ENCODE measurements at regions of chr7 and their contacts with region 1.

Region 1: DNA sequence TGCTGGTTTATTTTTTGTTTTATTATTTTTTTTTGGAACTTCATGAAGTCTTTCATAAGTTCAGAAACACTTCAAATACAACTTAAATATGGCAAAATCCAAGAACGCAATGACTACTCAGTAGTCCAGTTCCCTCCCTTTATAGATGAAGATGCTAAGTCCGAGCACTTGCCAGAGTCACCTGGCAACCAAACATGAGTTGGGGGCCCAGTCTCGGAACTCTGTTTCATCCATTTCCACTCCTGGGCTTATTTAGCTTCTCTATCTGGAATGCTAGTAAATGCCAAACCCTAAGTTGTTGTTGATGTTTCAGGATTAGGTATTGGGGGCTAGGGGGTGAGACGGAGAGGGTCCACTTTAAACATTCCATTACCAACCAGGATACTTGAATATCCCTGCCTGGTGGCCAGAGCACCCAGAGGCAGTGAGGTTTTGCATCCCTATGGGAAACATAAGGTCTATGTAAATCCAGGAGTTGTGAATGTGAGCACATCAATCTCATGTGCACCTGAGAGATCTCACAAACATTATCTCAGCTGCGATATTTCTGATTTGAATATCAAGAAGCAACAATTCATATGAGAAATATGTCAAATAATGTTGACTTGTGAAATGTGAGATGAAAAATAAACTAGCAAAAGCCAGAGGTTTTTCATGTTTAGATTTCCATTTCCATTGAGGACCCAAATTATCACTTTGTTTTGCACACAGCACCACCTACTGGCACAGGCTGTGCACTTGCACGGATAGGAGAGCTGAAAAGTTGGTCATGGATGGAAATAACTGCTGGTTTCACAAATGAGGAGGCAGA is 129.3 kb downstream of the PKD1L1 start:
- DNase-seq: peak; percentile 82
- ATAC-seq: peak; percentile 89
- H3K4me3 ChIP-seq: no peak overlapping the region
- H3K27ac ChIP-seq: no peak overlapping the region
- H3K4me1 ChIP-seq: peaks cover 4% of the 10 kb centered on the region
- H3K27me3 ChIP-seq: no peaks in the 10 kb centered on the region
- CTCF ChIP-seq: peak; percentile 95
- POLR2A ChIP-seq: no peak; the same call in 1 of the 2 replicates
- RAD21 ChIP-seq: peak; percentile 96

Region 2: DNA sequence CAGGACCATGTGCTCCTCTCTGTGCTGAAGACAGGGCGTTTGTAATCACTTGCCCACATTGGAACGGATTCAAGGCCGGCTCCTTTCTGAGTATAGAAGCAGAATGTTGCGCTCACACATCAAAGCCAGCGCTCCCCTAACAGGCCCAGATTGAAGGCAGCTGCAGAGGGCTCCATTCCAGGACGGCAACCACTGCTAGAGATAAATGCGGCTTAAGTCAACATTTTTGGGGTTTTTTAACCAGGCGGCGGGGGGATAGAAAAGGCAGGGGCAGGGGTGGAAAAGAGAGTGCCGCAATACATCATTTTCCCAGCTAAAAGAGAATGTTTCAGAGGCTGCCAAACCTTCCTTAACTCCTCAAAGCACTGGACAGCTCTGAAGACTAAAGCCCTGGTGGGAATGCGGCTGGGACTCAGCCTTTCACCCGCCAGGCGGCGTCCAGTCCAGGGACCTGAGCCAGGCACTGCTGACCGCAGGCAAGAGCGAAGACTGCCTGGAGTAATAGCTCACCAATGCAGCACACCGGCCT is 426.7 kb before region 1 on chr7:
- CTCF ChIA-PET with region 1: no interaction called
- POLR2A ChIA-PET with region 1: no interaction called
- dilution Hi-C with region 1: no loop called
- in situ Hi-C with region 1: no loop called
- intact Hi-C with region 1: loop called (anchors 1 kb)
- DNase-seq: peak; percentile 82
- ATAC-seq: peak; percentile 96
- H3K4me3 ChIP-seq: no peak overlapping the region
- H3K27ac ChIP-seq: no peak overlapping the region
- H3K4me1 ChIP-seq: peaks cover 6% of the 10 kb centered on the region; the same call in 1 of the 2 replicates
- H3K27me3 ChIP-seq: no peaks in the 10 kb centered on the region
- CTCF ChIP-seq: peak; percentile 62
- POLR2A ChIP-seq: no peak
- RAD21 ChIP-seq: peak; percentile 67

Region 3: DNA sequence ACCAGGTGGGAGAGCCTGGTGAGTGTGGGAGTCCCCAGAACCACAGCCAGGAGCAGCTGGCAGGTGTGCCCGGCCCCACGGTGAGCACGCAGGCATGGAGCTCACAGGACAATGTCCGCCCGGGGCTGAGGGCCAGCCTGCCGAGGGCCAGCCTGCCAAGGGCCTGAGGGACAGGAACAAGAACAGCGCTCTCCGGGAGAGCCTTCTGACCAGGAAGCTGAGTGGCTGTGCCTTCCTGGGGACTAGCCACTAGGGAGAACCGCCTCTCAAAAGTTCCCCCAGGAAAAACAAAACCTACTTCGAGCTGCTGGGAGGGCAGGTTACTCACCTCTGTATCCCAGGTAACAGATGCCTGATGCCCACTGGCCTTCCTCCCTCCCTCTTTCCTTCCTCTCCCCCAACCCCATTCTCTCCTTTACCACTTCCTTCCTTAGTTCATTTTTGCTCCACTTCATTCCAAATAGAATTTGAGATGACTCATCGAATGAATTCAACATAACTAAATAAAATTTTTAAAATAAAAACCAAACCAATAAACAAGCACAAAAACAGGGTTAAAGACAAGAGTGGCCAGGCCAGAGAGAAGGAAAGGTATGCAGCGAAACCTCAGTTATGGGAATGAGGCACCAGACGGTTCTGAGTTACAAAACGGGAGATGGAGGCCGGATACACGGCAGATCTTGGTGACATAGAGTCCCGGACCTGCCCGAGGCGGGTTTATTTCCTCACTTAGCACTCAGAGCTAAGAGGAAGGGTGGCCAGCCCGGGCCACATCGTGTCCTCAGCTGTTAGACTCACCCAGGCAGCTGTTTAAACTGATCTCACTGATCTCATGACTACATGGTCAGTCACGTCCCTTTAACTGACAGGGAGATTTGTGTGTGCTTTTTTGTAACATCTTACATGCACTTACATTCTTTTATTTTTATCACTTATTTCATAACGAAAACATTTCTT is 365.6 kb before region 1 on chr7:
- CTCF ChIA-PET with region 1: no interaction called
- POLR2A ChIA-PET with region 1: no interaction called
- dilution Hi-C with region 1: no loop called
- in situ Hi-C with region 1: no loop called
- intact Hi-C with region 1: loop called (anchors 5 kb)
- DNase-seq: peak; percentile 98
- ATAC-seq: peak; percentile 55
- H3K4me3 ChIP-seq: no peak overlapping the region
- H3K27ac ChIP-seq: peak overlapping the region; percentile 90
- H3K4me1 ChIP-seq: peaks cover 48% of the 10 kb centered on the region
- H3K27me3 ChIP-seq: no peaks in the 10 kb centered on the region
- CTCF ChIP-seq: no peak
- POLR2A ChIP-seq: no peak; the same call in 1 of the 2 replicates
- RAD21 ChIP-seq: no peak

Region 4: GRCh38 chr7:47536661-47537611 is 282.1 kb before region 1 on chr7:
- CTCF ChIA-PET with region 1: interaction called, 4 read pairs
- POLR2A ChIA-PET with region 1: interaction called, 12 read pairs
- dilution Hi-C with region 1: no loop called
- in situ Hi-C with region 1: no loop called
- intact Hi-C with region 1: no loop called
- DNase-seq: peak; percentile 76
- ATAC-seq: peak; percentile 46
- H3K4me3 ChIP-seq: peak overlapping the region; percentile 11
- H3K27ac ChIP-seq: peak overlapping the region; percentile 15; the same call in 1 of the 2 replicates
- H3K4me1 ChIP-seq: peaks cover 39% of the 10 kb centered on the region
- H3K27me3 ChIP-seq: no peaks in the 10 kb centered on the region
- CTCF ChIP-seq: no peak
- POLR2A ChIP-seq: no peak
- RAD21 ChIP-seq: no peak

Region 5: GRCh38 chr7:47600199-47601118 is 218.5 kb before region 1 on chr7:
- CTCF ChIA-PET with region 1: interaction called, 3 read pairs
- POLR2A ChIA-PET with region 1: interaction called, 14 read pairs
- dilution Hi-C with region 1: no loop called
- in situ Hi-C with region 1: no loop called
- intact Hi-C with region 1: no loop called
- DNase-seq: peak; percentile 86
- ATAC-seq: peak; percentile 73
- H3K4me3 ChIP-seq: no peak overlapping the region
- H3K27ac ChIP-seq: peak overlapping the region; percentile 97
- H3K4me1 ChIP-seq: peaks cover 34% of the 10 kb centered on the region
- H3K27me3 ChIP-seq: no peaks in the 10 kb centered on the region
- CTCF ChIP-seq: no peak
- POLR2A ChIP-seq: peak; percentile 39
- RAD21 ChIP-seq: no peak

Region 6: GRCh38 chr7:47786557-47787248 is 32.3 kb before region 1 on chr7:
- CTCF ChIA-PET with region 1: interaction called, 3 read pairs
- POLR2A ChIA-PET with region 1: no interaction called
- dilution Hi-C with region 1: no loop called
- in situ Hi-C with region 1: no loop called
- intact Hi-C with region 1: loop called (anchors 1 kb)
- DNase-seq: peak; percentile 99
- ATAC-seq: peak; percentile 92
- H3K4me3 ChIP-seq: no peak overlapping the region
- H3K27ac ChIP-seq: peak overlapping the region; percentile 94
- H3K4me1 ChIP-seq: peaks cover 26% of the 10 kb centered on the region
- H3K27me3 ChIP-seq: no peaks in the 10 kb centered on the region
- CTCF ChIP-seq: no peak
- POLR2A ChIP-seq: no peak
- RAD21 ChIP-seq: peak; percentile 34

Region 7: DNA sequence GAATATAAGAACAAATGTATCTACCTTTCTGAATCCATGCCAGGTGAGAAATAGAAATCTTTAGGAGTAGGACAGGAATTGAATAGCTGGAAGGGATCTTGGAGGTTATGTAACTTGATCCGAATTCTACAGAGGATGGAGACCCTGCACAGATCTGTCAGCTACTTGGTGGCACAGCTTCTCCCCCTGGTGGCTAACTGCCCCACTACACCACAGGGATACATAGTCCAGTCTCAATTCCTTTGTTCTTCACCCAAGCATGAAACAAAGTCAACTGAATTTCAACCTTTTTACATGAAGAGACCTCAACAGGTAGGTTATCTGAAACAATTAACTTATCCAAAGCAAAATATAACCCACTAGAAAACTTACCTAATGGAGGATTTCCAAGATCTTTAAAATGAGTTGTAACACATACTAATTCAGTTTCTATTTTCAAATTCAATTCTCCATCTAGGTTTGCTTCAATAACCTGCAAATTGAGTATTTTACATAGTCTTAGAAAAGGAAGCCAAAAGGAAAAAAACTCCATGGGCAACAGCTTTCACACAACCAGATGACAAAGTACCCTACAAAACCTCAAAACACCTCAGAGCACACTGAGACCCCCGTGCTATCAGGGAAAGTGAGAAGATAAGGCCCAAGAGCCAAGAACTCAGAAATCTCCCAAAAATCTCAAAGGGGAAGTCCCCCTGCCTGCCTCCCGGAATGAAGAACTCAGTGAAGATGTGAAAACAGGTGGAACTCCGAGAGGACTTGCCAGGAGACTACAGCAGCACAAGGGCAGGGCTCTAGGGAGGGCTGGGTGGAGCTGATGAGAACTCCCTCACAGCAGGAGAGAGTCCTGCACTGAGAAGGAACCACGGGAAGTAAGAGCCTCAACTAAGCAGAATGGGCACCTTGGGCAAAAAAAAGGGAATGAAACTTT is 150.1 kb after region 1 on chr7:
- CTCF ChIA-PET with region 1: no interaction called
- POLR2A ChIA-PET with region 1: no interaction called
- dilution Hi-C with region 1: no loop called
- in situ Hi-C with region 1: no loop called
- intact Hi-C with region 1: no loop called
- DNase-seq: peak; percentile 74
- ATAC-seq: peak; percentile 86
- H3K4me3 ChIP-seq: no peak overlapping the region
- H3K27ac ChIP-seq: no peak overlapping the region
- H3K4me1 ChIP-seq: peaks cover 7% of the 10 kb centered on the region; the same call in 1 of the 2 replicates
- H3K27me3 ChIP-seq: no peaks in the 10 kb centered on the region
- CTCF ChIP-seq: peak; percentile 83
- POLR2A ChIP-seq: no peak
- RAD21 ChIP-seq: peak; percentile 75